ENCODE measurements at regions of chr1 and their contacts with region 1.

Region 1: DNA sequence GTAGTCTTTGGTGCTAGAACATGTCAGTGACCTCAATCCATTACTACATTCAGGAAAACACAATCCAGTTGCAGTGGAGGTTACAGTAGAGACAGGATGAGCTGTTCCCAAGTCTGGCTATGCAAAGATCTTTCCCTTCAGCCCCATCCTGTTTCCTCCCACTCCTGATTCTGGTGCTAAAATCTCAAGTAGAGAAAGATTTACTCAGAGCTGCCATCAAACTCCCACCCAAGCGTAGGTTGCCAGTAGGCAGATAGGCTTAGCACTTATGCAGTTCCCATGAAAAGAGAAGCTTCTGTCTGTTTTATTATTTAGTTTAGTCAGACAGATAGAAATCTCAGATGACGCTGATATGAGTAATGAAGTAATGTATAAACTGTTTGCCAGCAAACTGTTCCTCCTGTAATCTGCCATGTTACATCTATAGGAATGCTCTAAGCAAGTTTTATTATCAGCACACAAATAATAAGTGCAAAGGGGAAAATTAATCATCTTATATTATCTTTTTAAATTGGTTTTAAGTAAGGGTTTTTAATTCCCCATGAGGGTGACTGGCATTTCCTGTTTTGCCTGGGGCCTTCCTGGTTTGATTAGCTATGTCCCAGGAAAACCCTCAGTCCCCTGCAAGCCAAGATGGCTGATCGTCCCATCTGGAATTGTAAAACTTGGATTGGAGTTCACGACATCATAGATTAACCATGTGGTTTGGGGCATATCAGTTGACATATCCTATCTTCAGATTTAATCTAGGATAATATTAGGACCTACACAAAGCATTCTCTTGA is 188.3 kb upstream of the PALMD start:
- DNase-seq: peak; percentile 88
- H3K4me3 ChIP-seq: no peak overlapping the region
- H3K27ac ChIP-seq: peak overlapping the region; percentile 63
- H3K4me1 ChIP-seq: peaks cover 23% of the 10 kb centered on the region
- H3K27me3 ChIP-seq: no peaks in the 10 kb centered on the region
- CTCF ChIP-seq: no peak

Region 2: GRCh38 chr1:99180343-99180808 is 277.2 kb before region 1 on chr1:
- CTCF ChIA-PET with region 1: no interaction called
- dilution Hi-C with region 1: no loop called
- in situ Hi-C with region 1: loop called in 1 of 2 experiments (anchors 25 kb)
- intact Hi-C with region 1: no loop called
- DNase-seq: peak; percentile 62
- H3K4me3 ChIP-seq: no peak overlapping the region
- H3K27ac ChIP-seq: no peak overlapping the region
- H3K4me1 ChIP-seq: no peaks in the 10 kb centered on the region
- H3K27me3 ChIP-seq: no peaks in the 10 kb centered on the region
- CTCF ChIP-seq: peak; percentile 73 to 89